ENCODE measurements at regions of chr2 and their contacts with region 1.

Region 1: GRCh38 chr2:209473930-209474419 is 50.1 kb downstream of the MAP2 start:
- DNase-seq: peak; percentile 49 to 70
- H3K4me3 ChIP-seq: no peak overlapping the region
- H3K27ac ChIP-seq: peak overlapping the region; percentile 81
- H3K4me1 ChIP-seq: peaks cover 24% of the 10 kb centered on the region
- H3K27me3 ChIP-seq: no peaks in the 10 kb centered on the region
- CTCF ChIP-seq: no peak

Region 2: GRCh38 chr2:209351636-209352035 is 122.3 kb before region 1 on chr2:
- CTCF ChIA-PET with region 1: no interaction called
- POLR2A ChIA-PET with region 1: no interaction called
- intact Hi-C with region 1: no loop called
- DNase-seq: no peak
- H3K4me3 ChIP-seq: no peak overlapping the region
- H3K27ac ChIP-seq: no peak overlapping the region
- H3K4me1 ChIP-seq: no peaks in the 10 kb centered on the region
- H3K27me3 ChIP-seq: no peaks in the 10 kb centered on the region
- CTCF ChIP-seq: no peak

Region 3: DNA sequence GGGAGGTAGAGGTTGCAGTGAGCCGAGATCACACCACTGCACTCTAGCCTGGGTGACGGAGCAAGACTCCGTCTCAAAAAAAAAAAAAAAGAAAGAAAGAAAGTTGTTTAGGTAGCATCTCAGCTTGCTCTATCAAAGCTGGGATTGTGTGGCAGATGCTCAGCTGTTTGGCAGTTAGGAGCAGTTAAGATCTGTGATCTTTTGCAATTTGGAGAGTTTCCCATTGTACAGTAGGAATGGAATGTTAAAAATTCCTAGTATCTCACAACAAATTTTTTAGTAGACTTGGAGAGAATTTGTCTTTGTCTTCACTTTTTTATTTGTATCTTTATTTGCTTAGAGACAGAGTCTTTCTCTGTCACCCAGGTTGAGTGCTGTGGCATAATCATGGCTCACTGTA is 174.7 kb after region 1 on chr2:
- CTCF ChIA-PET with region 1: no interaction called
- POLR2A ChIA-PET with region 1: no interaction called
- intact Hi-C with region 1: loop called (anchors 10 kb)
- DNase-seq: no peak
- H3K4me3 ChIP-seq: no peak overlapping the region
- H3K27ac ChIP-seq: no peak overlapping the region
- H3K4me1 ChIP-seq: no peaks in the 10 kb centered on the region
- H3K27me3 ChIP-seq: no peaks in the 10 kb centered on the region
- CTCF ChIP-seq: no peak

Region 4: DNA sequence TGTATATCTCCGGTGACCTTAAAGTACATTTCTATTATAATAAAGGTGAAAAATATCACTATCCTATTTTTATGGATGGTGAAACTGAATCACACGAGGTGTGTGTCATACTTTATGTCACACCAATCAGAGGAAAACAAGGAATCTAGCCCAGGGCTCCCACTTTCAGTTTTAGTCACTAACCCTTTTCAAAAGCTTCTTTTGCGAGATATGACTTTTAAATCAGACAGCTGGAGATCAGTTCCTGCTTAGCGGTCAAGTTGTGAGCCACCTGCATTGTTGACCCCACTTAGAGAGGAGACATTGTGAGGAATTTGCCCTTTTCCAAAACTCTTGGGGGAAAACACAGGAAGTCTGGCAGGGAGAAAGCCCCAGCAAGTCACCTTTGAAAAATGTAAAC is 1152.9 kb after region 1 on chr2:
- CTCF ChIA-PET with region 1: no interaction called
- POLR2A ChIA-PET with region 1: no interaction called
- intact Hi-C with region 1: no loop called
- DNase-seq: no peak
- H3K4me3 ChIP-seq: no peak overlapping the region
- H3K27ac ChIP-seq: no peak overlapping the region
- H3K4me1 ChIP-seq: no peaks in the 10 kb centered on the region
- H3K27me3 ChIP-seq: no peaks in the 10 kb centered on the region
- CTCF ChIP-seq: no peak

Measured in PC-9 (cell line).